ENCODE measurements at regions of chr22 and their contacts with region 1.

Region 1: GRCh38 chr22:23539135-23539838 is 40.8 kb downstream of the IGLL1 start:
- DNase-seq: peak; percentile 62 to 86
- ATAC-seq: peak; percentile 99 to 100 (median 100)
- H3K4me3 ChIP-seq: no peak overlapping the region
- H3K4me3 Mint-ChIP-seq: peak overlapping the region; percentile 61
- H3K27ac ChIP-seq: no peak overlapping the region
- H3K27ac Mint-ChIP-seq: peak overlapping the region; percentile 61 to 65
- H3K4me1 ChIP-seq: peaks cover 6% of the 10 kb centered on the region
- H3K4me1 Mint-ChIP-seq: peaks cover 12 to 13% of the 10 kb centered on the region in 2 donors
- H3K27me3 ChIP-seq: no peaks in the 10 kb centered on the region
- H3K27me3 Mint-ChIP-seq: peaks cover 0 to 6% of the 10 kb centered on the region in 2 donors
- CTCF ChIP-seq: peak; percentile 77

Region 2: GRCh38 chr22:23315341-23315917 is 223.9 kb before region 1 on chr22:
- intact Hi-C with region 1: loop called (anchors 10 kb)
- DNase-seq: peak; percentile 44 to 66
- ATAC-seq: no peak
- H3K4me3 ChIP-seq: no peak overlapping the region
- H3K4me3 Mint-ChIP-seq: no peak overlapping the region
- H3K27ac ChIP-seq: no peak overlapping the region
- H3K27ac Mint-ChIP-seq: no peak overlapping the region
- H3K4me1 ChIP-seq: peaks cover 3% of the 10 kb centered on the region
- H3K4me1 Mint-ChIP-seq: peaks cover 0 to 5% of the 10 kb centered on the region in 2 donors
- H3K27me3 ChIP-seq: no peaks in the 10 kb centered on the region
- H3K27me3 Mint-ChIP-seq: no peaks in the 10 kb centered on the region
- CTCF ChIP-seq: peak; percentile 47

Region 3: DNA sequence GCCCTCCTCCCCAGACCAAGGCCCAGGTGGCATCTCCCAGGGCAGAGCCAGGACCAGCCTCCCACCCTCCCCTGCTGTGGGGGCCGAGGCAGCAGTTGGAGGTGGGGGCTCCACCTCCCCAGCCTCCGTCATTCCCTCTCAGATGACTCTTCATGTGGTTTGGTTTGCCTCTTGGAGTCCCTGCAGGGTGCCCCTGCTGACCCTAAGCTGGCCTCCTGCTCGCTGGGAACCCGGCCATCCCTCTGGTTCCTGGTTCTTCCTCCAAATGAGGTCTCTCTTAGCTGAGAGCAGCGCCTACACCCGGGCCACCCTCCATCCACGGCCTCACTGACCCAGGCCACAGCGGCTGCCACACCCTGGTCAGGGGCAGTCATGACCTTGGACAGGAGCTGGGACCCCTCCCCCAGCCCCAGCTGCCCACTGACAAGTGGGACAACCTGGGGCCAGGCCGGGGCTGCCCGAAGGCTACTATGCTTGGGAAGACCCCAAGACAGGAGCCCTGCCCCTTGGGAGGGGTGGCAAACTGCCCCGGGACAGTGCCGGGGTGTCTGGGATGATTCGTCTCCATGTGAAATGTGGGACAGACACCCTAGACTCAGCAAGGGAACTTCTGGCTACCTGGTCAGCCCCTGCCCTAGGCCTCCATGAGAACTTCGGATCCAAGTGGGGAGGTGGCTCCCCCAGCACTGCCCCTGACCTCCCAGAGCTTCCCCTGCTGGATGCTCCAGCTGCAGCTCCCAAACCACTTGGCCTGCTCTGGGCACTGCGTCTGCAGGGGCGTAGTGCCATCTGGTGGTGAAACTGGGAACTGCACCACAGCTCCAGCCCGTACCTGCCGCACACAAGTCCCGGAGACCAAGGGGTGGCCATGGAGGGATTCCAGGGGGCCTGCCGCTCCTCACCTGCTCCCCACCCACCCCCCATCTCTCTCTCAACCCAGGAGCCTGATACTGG is 153.7 kb before region 1 on chr22:
- intact Hi-C with region 1: loop called (anchors 5 kb)
- DNase-seq: peak; percentile 80 to 89
- ATAC-seq: peak; percentile 74 to 97 (median 92)
- H3K4me3 ChIP-seq: no peak overlapping the region
- H3K4me3 Mint-ChIP-seq: no peak overlapping the region
- H3K27ac ChIP-seq: no peak overlapping the region
- H3K27ac Mint-ChIP-seq: no peak overlapping the region
- H3K4me1 ChIP-seq: peaks cover 3% of the 10 kb centered on the region
- H3K4me1 Mint-ChIP-seq: peaks cover 6 to 8% of the 10 kb centered on the region in 2 donors
- H3K27me3 ChIP-seq: no peaks in the 10 kb centered on the region
- H3K27me3 Mint-ChIP-seq: peaks cover 0 to 6% of the 10 kb centered on the region in 2 donors
- CTCF ChIP-seq: peak; percentile 96

Region 4: GRCh38 chr22:23402275-23403151 is 136.8 kb before region 1 on chr22:
- intact Hi-C with region 1: loop called (anchors 1 kb)
- DNase-seq: peak; percentile 45 to 69
- ATAC-seq: peak; percentile 60 to 95 (median 90)
- H3K4me3 ChIP-seq: no peak overlapping the region
- H3K4me3 Mint-ChIP-seq: no peak overlapping the region
- H3K27ac ChIP-seq: no peak overlapping the region
- H3K27ac Mint-ChIP-seq: no peak overlapping the region
- H3K4me1 ChIP-seq: peaks cover 9% of the 10 kb centered on the region
- H3K4me1 Mint-ChIP-seq: no peaks in the 10 kb centered on the region
- H3K27me3 ChIP-seq: no peaks in the 10 kb centered on the region
- H3K27me3 Mint-ChIP-seq: peaks cover 4 to 10% of the 10 kb centered on the region in 2 donors
- CTCF ChIP-seq: peak; percentile 29

Region 5: DNA sequence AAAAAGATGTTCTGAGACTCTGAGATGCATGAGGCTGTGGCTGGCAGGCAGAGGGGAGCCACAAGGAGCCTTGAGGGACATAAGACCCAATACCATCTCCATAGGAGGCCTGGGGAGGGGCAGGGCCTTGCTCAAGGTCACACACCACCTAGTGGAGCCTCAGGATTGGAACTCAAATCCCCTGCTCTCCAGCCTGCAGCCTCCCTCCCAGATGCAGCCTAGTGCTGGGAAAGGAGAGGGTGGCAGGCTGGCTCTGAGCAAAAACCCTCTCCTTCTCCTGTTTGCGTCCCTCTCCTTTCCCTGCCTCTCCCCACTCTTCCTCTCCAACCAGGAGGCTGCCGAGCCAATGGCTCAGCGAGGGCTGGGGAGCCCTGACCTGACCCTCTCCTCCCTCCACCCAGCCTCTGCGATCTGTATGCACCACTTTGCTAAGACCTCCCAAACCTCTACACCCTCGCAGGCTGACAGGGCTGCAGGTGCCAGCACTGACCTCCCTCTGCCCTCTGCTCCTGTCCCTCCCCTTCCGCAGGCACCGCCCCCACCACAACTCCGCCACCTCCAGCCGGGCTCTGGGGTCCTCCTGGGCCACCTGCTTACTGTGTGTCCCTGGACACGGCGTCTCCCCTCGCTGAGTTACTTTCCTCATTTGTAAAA is 26.1 kb after region 1 on chr22:
- intact Hi-C with region 1: no loop called
- DNase-seq: peak in 1 of 2 donors; percentile 19
- ATAC-seq: peak; percentile 48 to 82 (median 73)
- H3K4me3 ChIP-seq: peak overlapping the region; percentile 34
- H3K4me3 Mint-ChIP-seq: peak overlapping the region; percentile 87
- H3K27ac ChIP-seq: no peak overlapping the region
- H3K27ac Mint-ChIP-seq: peak overlapping the region in 1 of 2 donors; percentile 66
- H3K4me1 ChIP-seq: peaks cover 14% of the 10 kb centered on the region
- H3K4me1 Mint-ChIP-seq: peaks cover 7 to 8% of the 10 kb centered on the region in 2 donors
- H3K27me3 ChIP-seq: peaks cover 6% of the 10 kb centered on the region
- H3K27me3 Mint-ChIP-seq: peaks cover 8 to 21% of the 10 kb centered on the region in 2 donors
- CTCF ChIP-seq: no peak

Region 6: DNA sequence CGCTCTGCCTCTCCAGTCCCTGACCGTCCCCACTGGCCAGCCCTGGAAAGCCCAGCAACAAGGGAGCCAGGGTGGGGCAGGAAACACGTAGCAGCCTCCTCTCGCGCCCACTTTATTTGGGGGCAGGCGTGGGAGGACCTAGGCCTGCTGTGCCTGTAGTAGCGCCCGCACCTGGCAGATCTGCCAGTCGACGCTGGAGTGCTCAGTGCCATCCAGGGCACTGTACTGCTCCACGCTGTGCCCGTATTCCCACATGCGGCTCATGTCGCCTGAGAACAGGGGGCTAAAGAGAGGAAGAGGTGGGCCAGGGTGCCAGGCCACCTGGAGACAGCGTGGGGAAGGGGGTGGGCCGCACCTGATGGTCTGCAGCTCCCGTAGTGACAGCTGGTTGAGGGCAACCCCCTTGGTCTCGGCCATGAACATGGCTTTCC is 109.8 kb after region 1 on chr22:
- intact Hi-C with region 1: no loop called
- DNase-seq: no peak
- ATAC-seq: no peak
- H3K4me3 ChIP-seq: no peak overlapping the region
- H3K4me3 Mint-ChIP-seq: no peak overlapping the region
- H3K27ac ChIP-seq: no peak overlapping the region
- H3K27ac Mint-ChIP-seq: no peak overlapping the region
- H3K4me1 ChIP-seq: no peaks in the 10 kb centered on the region
- H3K4me1 Mint-ChIP-seq: no peaks in the 10 kb centered on the region
- H3K27me3 ChIP-seq: no peaks in the 10 kb centered on the region
- H3K27me3 Mint-ChIP-seq: no peaks in the 10 kb centered on the region
- CTCF ChIP-seq: no peak

Region 7: DNA sequence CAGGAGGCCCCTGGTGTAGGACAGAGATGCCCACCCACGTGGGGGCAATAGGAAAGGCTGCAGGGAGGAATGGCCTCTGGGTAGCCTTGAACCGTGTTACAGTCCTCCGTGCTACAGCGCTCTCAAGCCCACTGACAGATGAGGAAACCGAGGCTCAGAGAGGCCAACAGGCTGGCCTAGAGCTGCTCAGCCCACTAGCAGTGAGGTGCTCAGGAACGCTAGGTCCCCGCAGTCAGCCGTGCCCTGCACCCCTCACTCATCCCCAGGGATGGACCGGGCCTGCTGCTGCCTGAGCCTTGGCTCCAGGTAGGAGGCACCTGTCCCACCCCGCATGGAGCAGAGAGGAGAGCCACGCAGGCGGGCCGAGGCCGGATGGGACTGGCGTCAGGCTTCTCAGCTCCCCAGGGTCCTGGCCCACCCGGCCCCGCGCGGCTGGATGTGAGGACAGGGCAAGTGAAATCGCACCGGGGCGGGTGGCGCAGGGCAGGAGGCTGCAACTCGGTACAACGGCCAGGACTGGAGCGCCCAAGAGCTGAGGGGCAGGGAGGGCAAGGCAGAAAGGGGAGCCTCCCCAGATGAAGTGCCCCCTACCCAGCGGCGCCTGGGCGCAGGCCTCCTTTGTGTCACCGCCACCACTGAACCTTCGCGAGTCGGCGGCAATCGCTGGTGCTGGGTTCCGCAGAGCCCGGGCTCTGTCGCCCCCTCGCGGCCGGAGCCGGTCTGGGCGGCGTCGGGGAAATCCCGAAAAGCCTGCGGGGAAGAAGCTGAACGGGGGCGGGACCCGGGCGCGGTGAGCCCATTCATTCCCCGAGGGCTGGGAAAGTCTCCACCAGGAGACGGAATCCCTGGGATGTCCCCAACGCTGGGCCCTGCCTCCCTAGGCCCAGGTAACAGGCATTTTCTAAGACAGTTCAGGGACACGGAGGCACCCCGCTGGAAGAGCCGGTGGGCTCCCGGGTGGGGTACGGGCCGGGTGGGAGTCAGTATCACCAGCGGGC is 310.0 kb after region 1 on chr22:
- intact Hi-C with region 1: loop called (anchors 5 kb)
- DNase-seq: peak; percentile 90 to 91
- ATAC-seq: peak; percentile 92 to 99 (median 98)
- H3K4me3 ChIP-seq: no peak overlapping the region
- H3K4me3 Mint-ChIP-seq: no peak overlapping the region
- H3K27ac ChIP-seq: no peak overlapping the region
- H3K27ac Mint-ChIP-seq: peak overlapping the region in 1 of 2 donors; percentile 54
- H3K4me1 ChIP-seq: peaks cover 37% of the 10 kb centered on the region
- H3K4me1 Mint-ChIP-seq: peaks cover 0 to 8% of the 10 kb centered on the region in 2 donors
- H3K27me3 ChIP-seq: no peaks in the 10 kb centered on the region
- H3K27me3 Mint-ChIP-seq: no peaks in the 10 kb centered on the region
- CTCF ChIP-seq: peak; percentile 97

Region 8: GRCh38 chr22:24583221-24584165 is 1044.2 kb after region 1 on chr22:
- intact Hi-C with region 1: no loop called
- DNase-seq: no peak
- ATAC-seq: no peak
- H3K4me3 ChIP-seq: no peak overlapping the region
- H3K4me3 Mint-ChIP-seq: no peak overlapping the region
- H3K27ac ChIP-seq: no peak overlapping the region
- H3K27ac Mint-ChIP-seq: no peak overlapping the region
- H3K4me1 ChIP-seq: no peaks in the 10 kb centered on the region
- H3K4me1 Mint-ChIP-seq: no peaks in the 10 kb centered on the region
- H3K27me3 ChIP-seq: no peaks in the 10 kb centered on the region
- H3K27me3 Mint-ChIP-seq: no peaks in the 10 kb centered on the region
- CTCF ChIP-seq: no peak

Measured in natural killer cell (primary cell).